Activated CD8-positive, alpha-beta memory T cell treated with anti-CD3 and anti-CD28 coated beads, Interleukin-2, amount 10 ng/mL, durations not matched to agents 7 days and 5 days (primary cell): ENCODE measurements at regions of chr10 and their contacts with region 1.

Region 1: GRCh38 chr10:100518761-100519241 is 860 bp downstream of the SEC31B start:
- DNase-seq: peak; percentile 75
- ATAC-seq: peak; percentile 84
- H3K4me3 Mint-ChIP-seq: no peak overlapping the region
- H3K27ac Mint-ChIP-seq: peak overlapping the region; percentile 45
- H3K4me1 Mint-ChIP-seq: peaks cover 33% of the 10 kb centered on the region
- H3K27me3 Mint-ChIP-seq: no peaks in the 10 kb centered on the region

Region 2: DNA sequence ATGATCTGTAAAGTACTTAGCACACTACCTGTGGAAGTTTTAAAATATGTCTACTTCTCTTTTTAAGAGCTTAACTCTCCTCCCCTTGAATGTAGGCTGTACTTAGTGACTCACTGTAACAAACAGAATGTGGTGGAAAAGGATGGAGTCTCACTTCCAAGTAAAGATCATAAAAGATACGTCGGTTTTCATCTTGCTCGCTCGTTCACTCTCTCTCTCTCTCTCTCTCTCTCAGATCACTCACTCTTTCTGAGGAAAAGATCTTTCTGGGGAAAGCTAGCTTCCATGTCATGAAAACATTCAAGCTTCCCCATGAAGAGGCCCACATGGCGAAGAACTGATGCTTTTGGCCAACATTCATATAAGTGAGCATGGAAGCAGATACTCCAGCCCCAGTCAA is 294.9 kb before region 1 on chr10:
- CTCF ChIA-PET with region 1: no interaction called
- DNase-seq: no peak
- ATAC-seq: no peak
- H3K4me3 Mint-ChIP-seq: no peak overlapping the region
- H3K27ac Mint-ChIP-seq: no peak overlapping the region
- H3K4me1 Mint-ChIP-seq: peaks cover 19% of the 10 kb centered on the region
- H3K27me3 Mint-ChIP-seq: no peaks in the 10 kb centered on the region

Region 3: DNA sequence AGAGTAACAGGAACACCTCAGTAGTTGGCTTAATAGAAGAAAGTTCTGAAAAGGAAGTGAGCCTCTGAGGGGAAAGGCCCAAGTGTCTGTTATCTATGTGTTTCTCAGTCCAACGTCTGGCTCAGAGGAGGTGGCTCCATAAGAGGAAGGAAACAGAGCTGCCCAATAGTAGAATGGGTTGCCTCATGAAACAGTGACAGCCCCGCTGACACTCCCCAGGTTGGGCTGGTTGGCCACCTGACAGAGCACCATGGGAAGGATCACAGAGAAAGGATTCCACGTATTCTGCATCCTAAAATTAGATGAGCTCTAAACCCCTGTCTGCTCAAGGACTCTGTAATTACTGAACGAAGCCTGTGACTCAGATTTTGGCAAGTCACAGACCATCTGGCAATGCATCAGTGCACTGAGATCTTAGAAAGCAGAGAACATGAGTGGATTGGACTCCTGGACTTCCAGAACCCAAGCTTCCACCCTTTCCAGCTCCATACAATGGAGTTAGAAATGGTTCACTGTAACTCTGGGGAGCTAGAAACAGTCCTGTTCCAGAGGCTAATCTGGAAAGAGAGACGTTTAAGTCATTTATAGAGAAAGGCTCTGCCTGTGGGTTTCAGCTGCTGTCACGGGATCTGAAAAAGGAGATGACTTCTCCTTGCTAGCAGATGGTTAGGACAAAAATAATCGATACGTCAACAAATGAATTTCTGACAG is 191.6 kb before region 1 on chr10:
- CTCF ChIA-PET with region 1: interaction called, 10 read pairs
- DNase-seq: peak; percentile 61
- ATAC-seq: peak; percentile 82
- H3K4me3 Mint-ChIP-seq: no peak overlapping the region
- H3K27ac Mint-ChIP-seq: no peak overlapping the region
- H3K4me1 Mint-ChIP-seq: peaks cover 11% of the 10 kb centered on the region
- H3K27me3 Mint-ChIP-seq: peaks cover 24% of the 10 kb centered on the region

Region 4: GRCh38 chr10:100346765-100347567 is 171.8 kb before region 1 on chr10 and contains the start of gene SCD:
- CTCF ChIA-PET with region 1: interaction called, 55 read pairs
- DNase-seq: peak; percentile 94
- ATAC-seq: peak; percentile 93
- H3K4me3 Mint-ChIP-seq: peak within 1 kb of the TSS; percentile 98
- H3K27ac Mint-ChIP-seq: peak within 1 kb of the TSS; percentile 83
- H3K4me1 Mint-ChIP-seq: peaks cover 55% of the 10 kb centered on the region
- H3K27me3 Mint-ChIP-seq: no peaks in the 10 kb centered on the region
- total RNA-seq, gene SCD: 121 to 134 TPM

Region 5: DNA sequence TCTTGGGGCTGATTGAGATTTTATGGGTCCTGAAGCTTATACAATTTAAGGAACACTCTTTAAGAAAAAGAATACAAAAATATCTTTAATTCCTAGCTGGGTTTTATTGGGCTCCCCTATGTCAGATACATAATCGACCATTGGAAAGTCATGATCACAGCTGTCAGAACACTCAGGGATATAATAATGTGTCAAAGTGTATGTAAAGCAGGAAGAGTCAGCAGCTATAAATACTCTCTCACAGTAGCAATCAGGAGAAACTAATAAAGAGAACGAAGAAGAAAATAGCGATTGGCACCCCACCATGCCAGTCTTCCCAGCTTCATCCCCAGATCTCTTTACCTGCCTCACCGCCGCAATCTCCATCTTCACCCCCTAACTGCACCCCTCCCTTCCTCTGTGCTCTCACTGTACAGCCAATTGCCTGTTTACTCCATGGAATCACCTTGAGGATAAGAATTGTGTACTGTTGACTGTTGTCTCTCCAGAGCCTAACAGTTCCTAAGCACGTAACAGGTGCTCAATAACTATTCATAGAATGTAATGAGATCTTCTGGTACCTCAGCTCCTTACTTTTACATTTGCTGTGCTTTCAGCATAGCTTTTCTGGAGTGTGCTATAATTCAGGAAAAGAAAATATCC is 80.0 kb before region 1 on chr10:
- CTCF ChIA-PET with region 1: interaction called, 272 read pairs
- DNase-seq: no peak
- ATAC-seq: no peak
- H3K4me3 Mint-ChIP-seq: no peak overlapping the region
- H3K27ac Mint-ChIP-seq: no peak overlapping the region
- H3K4me1 Mint-ChIP-seq: peaks cover 4% of the 10 kb centered on the region
- H3K27me3 Mint-ChIP-seq: peaks cover 3% of the 10 kb centered on the region

Region 6: GRCh38 chr10:100496567-100496966 is 22.2 kb before region 1 on chr10:
- CTCF ChIA-PET with region 1: interaction called, 93 read pairs
- DNase-seq: no peak
- ATAC-seq: no peak
- H3K4me3 Mint-ChIP-seq: no peak overlapping the region
- H3K27ac Mint-ChIP-seq: peak overlapping the region; percentile 24
- H3K4me1 Mint-ChIP-seq: peaks cover 57% of the 10 kb centered on the region
- H3K27me3 Mint-ChIP-seq: no peaks in the 10 kb centered on the region

Region 7: GRCh38 chr10:100529475-100530298 is 10.9 kb after region 1 on chr10 and contains the start of gene NDUFB8:
- CTCF ChIA-PET with region 1: interaction called, 32 read pairs
- DNase-seq: peak; percentile 93
- ATAC-seq: peak; percentile 89
- H3K4me3 Mint-ChIP-seq: peak within 1 kb of the TSS; percentile 85
- H3K27ac Mint-ChIP-seq: peak within 1 kb of the TSS; percentile 98
- H3K4me1 Mint-ChIP-seq: peaks cover 38% of the 10 kb centered on the region
- H3K27me3 Mint-ChIP-seq: no peaks in the 10 kb centered on the region
- total RNA-seq, gene NDUFB8: 268 to 300 TPM

Region 8: DNA sequence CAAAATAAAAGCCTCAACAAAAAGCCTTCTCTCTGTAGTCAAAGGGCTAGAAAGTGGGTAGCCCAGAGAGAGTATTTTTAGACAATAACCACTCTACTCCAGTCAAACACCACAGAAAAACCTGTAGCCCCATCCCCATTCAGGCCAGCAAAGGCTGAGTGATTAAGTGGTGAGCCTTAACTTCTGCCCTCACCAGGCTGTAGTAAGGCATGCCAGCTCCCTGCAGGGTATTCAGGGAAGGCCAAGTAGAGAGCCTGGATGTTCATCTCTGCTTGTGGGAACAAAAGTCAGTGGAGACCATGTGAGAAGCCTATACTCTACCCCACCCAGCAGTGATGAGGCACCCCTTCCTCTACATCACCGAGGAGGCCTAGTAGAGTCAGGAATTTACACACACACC is 68.2 kb after region 1 on chr10:
- CTCF ChIA-PET with region 1: no interaction called
- DNase-seq: no peak
- ATAC-seq: no peak
- H3K4me3 Mint-ChIP-seq: no peak overlapping the region
- H3K27ac Mint-ChIP-seq: no peak overlapping the region
- H3K4me1 Mint-ChIP-seq: no peaks in the 10 kb centered on the region
- H3K27me3 Mint-ChIP-seq: peaks cover 70% of the 10 kb centered on the region